ENCODE measurements at regions of chr1 and their contacts with region 1.

Region 1: DNA sequence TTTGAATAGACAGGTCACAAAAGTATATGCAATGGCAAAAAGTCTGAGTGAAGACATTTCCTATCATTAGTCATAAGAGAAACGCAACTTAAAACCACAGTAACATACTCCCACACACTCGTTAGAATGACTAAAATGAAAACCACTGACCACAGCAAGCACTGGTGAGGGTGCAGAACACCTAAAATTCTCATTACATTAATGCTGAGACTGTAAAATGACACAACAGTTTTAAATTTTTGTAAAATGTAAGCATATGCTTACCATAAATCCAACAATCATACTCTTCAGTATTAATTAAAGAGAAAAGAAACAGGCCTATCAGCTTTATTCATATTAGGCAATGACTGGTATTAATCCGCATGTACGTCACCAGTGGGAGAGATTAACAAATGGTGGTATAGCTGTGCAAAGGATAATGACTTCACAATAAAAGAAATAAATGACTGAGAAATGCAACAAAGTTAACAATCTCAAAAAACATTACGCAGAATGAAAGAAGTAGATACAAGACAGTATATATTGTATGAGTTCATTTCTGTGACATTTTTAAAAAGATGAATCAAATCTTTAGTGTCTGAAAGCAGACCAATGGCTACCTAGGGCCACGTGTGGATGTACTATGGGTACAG is 253.5 kb downstream of the AKT3 start:
- DNase-seq: peak; percentile 54
- CTCF ChIP-seq: no peak

Region 2: DNA sequence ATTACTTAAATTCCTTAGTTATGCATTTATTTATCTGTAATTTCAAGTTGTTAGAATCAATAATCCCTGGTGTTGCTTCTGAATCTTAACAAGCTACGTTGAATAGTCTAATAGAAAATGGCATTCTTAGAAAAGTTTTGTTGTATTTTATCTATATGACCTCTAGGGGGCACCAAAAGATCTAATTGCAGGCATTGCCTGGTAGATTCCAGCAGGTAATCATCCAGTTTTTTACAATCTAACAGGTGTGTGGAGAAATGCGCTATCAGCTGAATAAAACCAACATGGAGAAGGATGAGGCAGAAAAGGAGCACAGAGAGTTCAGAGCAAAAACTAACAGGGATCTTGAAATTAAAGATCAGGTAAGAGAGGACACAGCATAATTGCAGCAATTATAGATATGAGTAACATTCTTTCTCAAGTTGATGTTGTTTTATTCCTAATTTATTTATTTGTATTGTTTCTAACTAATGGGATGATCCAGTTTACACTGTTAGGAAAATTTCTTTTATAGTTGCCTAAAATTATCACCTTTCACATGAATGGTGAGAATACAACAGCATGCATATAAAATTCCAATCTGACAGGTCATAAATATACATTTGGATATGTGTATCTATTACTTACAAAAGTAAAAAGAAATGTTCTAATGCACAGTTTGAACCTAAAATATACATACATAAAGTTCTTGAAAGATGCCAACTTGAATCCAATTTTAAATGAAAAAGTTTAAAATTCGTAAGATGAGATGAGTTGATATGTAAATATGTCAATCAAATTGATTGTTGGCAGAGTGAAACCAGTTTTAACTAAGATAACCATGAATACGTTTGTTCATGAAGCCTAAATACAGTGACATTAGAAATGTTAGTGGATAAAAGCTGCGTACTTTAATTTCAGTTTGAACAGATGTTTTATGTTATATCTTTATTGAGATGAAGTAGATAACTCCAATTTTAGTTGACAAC is 252.3 kb before region 1 on chr1:
- in situ Hi-C with region 1: loop called (anchors 10 kb)
- DNase-seq: peak; percentile 47
- CTCF ChIP-seq: peak; percentile 31